CD4-positive, alpha-beta T cell (primary cell): ENCODE measurements at regions of chr13 and their contacts with region 1.

Region 1: GRCh38 chr13:85806553-85807175 is 7.4 kb upstream of the SLITRK6 start:
- DNase-seq: peak in 3 of 14 experiments; percentile 13 to 29 (median 29)
- ATAC-seq: no peak
- H3K4me3 ChIP-seq: no peak overlapping the region
- H3K4me3 Mint-ChIP-seq: no peak overlapping the region
- H3K27ac ChIP-seq: no peak overlapping the region
- H3K27ac Mint-ChIP-seq: no peak overlapping the region
- H3K4me1 ChIP-seq: no peaks in the 10 kb centered on the region
- H3K4me1 Mint-ChIP-seq: no peaks in the 10 kb centered on the region
- H3K27me3 ChIP-seq: no peaks in the 10 kb centered on the region
- H3K27me3 Mint-ChIP-seq: no peaks in the 10 kb centered on the region
- CTCF ChIP-seq: peak; percentile 61

Region 2: DNA sequence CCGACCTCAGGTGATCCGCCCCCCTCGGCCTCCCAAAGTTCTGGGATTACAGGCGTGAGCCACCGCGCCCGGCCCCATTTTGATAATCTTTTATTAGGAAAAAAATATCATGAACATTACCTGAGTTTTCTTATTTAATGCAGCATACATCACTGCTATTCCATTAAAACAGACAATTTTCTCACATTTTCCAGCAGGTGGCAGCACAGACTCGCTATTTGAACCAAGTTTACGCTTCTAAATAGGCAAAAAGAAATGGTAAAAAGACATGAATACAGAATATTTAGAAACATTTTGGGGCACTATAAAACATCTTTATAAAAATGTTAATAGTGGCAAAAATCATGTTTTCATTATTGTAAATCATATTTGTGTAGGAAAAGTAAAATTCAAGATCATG is 910.5 kb before region 1 on chr13:
- CTCF ChIA-PET with region 1: no interaction called
- POLR2A ChIA-PET with region 1: no interaction called
- intact Hi-C with region 1: loop called (anchors 2 kb)
- DNase-seq: peak in 5 of 14 experiments; percentile 7 to 51 (median 31)
- ATAC-seq: no peak
- H3K4me3 ChIP-seq: no peak overlapping the region
- H3K4me3 Mint-ChIP-seq: no peak overlapping the region
- H3K27ac ChIP-seq: no peak overlapping the region
- H3K27ac Mint-ChIP-seq: no peak overlapping the region
- H3K4me1 ChIP-seq: no peaks in the 10 kb centered on the region
- H3K4me1 Mint-ChIP-seq: no peaks in the 10 kb centered on the region
- H3K27me3 ChIP-seq: no peaks in the 10 kb centered on the region
- H3K27me3 Mint-ChIP-seq: no peaks in the 10 kb centered on the region
- CTCF ChIP-seq: peak; percentile 66